AG04450 (cell line): ENCODE measurements at regions of chr5 and their contacts with region 1.

Region 1: GRCh38 chr5:122076664-122077365 is 1.2 kb downstream of the LOX start:
- DNase-seq: no peak
- H3K4me3 ChIP-seq: peak overlapping the region; percentile 92
- H3K27ac ChIP-seq: peak overlapping the region; percentile 97
- H3K27me3 ChIP-seq: no peaks in the 10 kb centered on the region
- CTCF ChIP-seq: peak; percentile 93

Region 2: GRCh38 chr5:121968910-121969607 is 107.8 kb before region 1 on chr5:
- CTCF ChIA-PET with region 1: interaction called, 26 read pairs
- POLR2A ChIA-PET with region 1: interaction called, 52 read pairs
- DNase-seq: peak; percentile 98
- H3K4me3 ChIP-seq: peak overlapping the region; percentile 36
- H3K27ac ChIP-seq: peak overlapping the region; percentile 86
- H3K27me3 ChIP-seq: no peaks in the 10 kb centered on the region
- CTCF ChIP-seq: no peak

Region 3: DNA sequence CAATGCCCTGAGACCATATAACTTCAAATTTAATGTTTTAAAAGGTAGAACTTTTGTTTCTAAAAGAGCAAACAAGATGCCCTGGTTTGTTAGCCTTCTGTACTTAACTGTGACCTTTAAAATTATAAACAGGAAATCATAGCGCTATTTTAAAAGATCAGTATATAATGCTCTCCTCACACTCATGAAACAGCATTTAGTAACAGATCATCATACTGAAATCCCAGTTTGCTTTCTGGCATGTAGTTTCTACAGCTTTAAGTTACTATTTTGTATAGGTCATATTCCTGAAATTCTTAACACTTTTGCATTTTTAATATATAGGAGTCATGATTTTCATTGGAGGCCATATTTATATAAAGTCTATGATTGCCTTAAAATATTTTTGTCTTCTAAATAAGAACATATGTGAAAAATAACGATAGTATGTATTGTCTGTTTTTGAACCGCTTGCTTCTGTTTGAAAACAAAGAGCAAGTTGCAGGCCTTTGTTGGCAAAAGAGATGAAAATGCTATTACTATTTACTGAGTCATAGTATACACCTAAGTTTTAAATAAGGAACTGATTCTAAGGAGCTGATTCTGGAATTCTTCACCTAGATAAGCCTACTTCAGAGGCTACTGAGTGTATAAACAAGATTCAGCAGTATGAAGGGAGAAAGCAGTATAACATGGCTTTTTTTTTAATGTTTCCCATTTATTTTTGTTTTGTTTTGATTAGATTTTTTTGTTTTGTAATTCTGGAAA is 94.5 kb before region 1 on chr5:
- CTCF ChIA-PET with region 1: interaction called, 22 read pairs
- POLR2A ChIA-PET with region 1: no interaction called
- DNase-seq: no peak
- H3K4me3 ChIP-seq: no peak overlapping the region
- H3K27ac ChIP-seq: no peak overlapping the region
- H3K27me3 ChIP-seq: no peaks in the 10 kb centered on the region
- CTCF ChIP-seq: no peak

Region 4: DNA sequence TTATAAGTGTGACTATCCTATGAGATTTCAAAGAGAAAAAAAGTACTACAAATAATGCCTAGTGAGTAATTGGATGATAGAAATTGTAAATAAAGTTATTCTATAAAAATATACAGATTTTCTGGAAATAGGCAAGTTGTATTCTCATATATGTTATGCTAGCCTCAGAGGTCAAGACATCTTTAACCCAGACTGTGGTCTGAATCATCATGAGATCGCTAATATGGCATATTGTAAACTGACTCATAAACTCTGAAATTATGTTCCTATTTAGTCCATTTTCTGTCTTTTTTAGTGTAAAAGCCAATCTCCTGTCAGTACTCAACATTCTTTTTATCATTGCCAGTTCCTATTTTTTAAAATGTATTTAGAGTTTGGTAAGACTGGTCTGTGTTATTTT is 13.0 kb before region 1 on chr5:
- CTCF ChIA-PET with region 1: interaction called, 48 read pairs
- POLR2A ChIA-PET with region 1: interaction called, 3 read pairs
- DNase-seq: no peak
- H3K4me3 ChIP-seq: no peak overlapping the region
- H3K27ac ChIP-seq: no peak overlapping the region
- H3K27me3 ChIP-seq: no peaks in the 10 kb centered on the region
- CTCF ChIP-seq: no peak

Region 5: DNA sequence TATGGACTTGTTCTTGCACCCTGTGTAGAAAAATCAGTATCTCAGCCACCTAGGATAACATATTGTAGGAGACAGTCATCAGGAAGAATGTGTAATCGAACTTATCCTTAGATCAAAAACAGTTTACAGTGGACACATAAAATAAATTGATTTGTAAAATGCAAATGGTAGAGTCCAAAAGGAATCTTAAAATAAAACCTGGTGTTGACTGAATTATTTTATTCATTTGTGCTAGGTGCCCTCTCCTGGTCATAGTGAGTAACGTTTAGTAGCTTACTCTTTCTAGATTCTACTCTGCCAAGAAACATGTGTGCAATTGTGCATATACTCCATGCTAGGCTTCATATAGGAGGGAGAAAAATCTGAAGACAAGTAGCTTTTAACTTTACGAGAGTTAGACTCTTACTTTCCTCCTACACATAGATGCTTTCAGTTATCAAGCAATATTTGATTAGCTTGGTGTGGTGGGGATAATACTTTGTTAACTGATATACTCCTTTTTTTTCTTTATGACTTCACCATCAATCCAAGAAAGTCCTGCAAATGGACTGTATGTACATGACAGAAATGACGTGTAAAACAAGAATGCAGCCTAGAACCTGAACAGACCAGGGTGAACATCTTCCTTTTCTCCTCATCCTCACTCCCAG is 24.9 kb after region 1 on chr5:
- CTCF ChIA-PET with region 1: interaction called, 105 read pairs
- POLR2A ChIA-PET with region 1: interaction called, 6 read pairs
- DNase-seq: no peak
- H3K4me3 ChIP-seq: no peak overlapping the region
- H3K27ac ChIP-seq: no peak overlapping the region
- H3K27me3 ChIP-seq: no peaks in the 10 kb centered on the region
- CTCF ChIP-seq: peak; percentile 67

Region 6: DNA sequence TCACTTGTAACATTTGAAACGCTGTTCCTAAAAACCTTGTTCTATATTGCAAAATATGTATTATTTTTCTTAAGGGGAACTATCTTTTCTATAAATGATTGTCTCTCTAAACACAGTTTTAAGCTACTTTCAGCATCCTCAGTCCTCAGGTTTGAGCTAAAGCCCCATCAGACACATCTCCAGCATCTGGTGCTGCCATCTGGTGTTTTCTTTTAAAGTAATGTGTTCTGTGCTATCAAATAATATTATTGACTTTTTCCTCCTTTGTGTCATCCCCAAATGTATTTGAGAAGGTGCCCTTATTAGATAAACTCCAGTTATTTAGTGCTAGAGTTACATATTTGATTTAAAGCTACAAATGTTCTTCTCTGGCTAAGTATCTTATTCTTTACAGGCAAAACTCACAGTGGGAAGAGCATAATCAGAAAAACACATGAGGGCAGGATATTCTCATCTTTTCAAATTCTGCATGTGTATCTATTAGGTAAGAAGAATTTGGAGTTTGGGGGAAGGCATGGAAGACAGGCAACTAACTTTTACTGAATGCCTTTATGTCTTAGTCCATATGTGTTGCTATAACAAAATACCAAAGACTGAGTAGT is 80.0 kb after region 1 on chr5:
- CTCF ChIA-PET with region 1: interaction called, 33 read pairs
- POLR2A ChIA-PET with region 1: interaction called, 6 read pairs
- DNase-seq: no peak
- H3K4me3 ChIP-seq: no peak overlapping the region
- H3K27ac ChIP-seq: no peak overlapping the region
- H3K27me3 ChIP-seq: no peaks in the 10 kb centered on the region
- CTCF ChIP-seq: peak; percentile 57

Region 7: GRCh38 chr5:122415030-122415800 is 338.4 kb after region 1 on chr5:
- CTCF ChIA-PET with region 1: no interaction called
- POLR2A ChIA-PET with region 1: no interaction called
- DNase-seq: peak; percentile 45
- H3K4me3 ChIP-seq: no peak overlapping the region
- H3K27ac ChIP-seq: no peak overlapping the region
- H3K27me3 ChIP-seq: no peaks in the 10 kb centered on the region
- CTCF ChIP-seq: peak; percentile 84